ENCODE measurements at regions of chr5 and their contacts with region 1.

Region 1: DNA sequence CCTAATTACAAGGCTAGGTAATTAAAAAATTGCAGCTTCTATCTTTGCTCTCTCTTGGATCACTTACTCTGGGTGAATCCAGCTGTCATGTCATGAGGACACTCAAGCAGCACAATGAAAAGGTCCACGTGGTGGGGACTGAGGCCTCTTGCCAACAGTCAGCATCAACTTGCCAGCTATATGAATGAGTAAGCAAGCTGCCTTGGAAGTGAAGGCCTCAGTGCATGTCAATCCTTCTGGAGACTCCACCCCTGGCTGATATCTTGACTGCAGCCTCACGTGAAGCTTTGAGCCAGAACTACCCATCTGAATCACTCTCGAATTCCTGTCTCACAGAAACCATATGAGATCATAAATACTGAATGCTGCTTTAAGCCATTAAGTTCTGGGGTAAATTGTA is 140.5 kb downstream of the SNX18 start:
- DNase-seq: no peak
- ATAC-seq: no peak

Region 2: GRCh38 chr5:54524704-54525103 is 133.3 kb before region 1 on chr5:
- intact Hi-C with region 1: loop called (anchors 5 kb)
- DNase-seq: peak; percentile 70
- ATAC-seq: peak; percentile 26